Right ventricle myocardium inferior (tissue), 1 donor: ENCODE measurements at regions of chr2 and their contacts with region 1.

Region 1: DNA sequence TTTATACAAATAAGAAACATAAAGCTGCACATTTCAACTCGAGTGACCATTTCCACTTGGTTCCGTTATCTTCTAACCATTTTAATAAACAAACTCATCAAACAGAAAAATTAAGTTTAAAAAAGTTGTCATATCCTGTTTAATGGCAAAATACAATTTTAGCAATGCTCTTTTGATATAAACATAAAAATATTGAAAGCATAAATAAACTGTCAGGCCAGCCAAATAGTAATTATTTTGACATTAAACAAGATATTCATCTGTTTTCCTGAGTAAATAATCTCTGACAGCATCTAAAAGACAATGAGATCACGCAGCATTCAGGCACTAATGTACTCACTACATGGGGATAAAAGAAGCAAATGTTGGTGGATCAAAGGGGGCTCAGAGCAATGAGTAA is 145.3 kb upstream of the ATP5MC3 start:
- DNase-seq: no peak
- ATAC-seq: no peak

Region 2: GRCh38 chr2:175309799-175310198 is 17.0 kb before region 1 on chr2:
- intact Hi-C with region 1: loop called (anchors 2 kb)
- DNase-seq: no peak
- ATAC-seq: no peak